ENCODE measurements at regions of chr12 and their contacts with region 1.

Region 1: GRCh38 chr12:39764944-39765560 is 145.4 kb upstream of the ABCD2 start:
- DNase-seq: peak; percentile 18 to 33 (median 27)
- ATAC-seq: peak; percentile 75
- H3K4me3 ChIP-seq: no peak overlapping the region
- H3K27ac ChIP-seq: no peak overlapping the region
- H3K4me1 ChIP-seq: no peaks in the 10 kb centered on the region
- H3K27me3 ChIP-seq: no peaks in the 10 kb centered on the region
- CTCF ChIP-seq: peak; percentile 52 to 82 (median 71); a peak in 5 of 6 replicates
- EP300 ChIP-seq: no peak
- POLR2A ChIP-seq: no peak
- RAD21 ChIP-seq: peak; percentile 73 to 87

Region 2: DNA sequence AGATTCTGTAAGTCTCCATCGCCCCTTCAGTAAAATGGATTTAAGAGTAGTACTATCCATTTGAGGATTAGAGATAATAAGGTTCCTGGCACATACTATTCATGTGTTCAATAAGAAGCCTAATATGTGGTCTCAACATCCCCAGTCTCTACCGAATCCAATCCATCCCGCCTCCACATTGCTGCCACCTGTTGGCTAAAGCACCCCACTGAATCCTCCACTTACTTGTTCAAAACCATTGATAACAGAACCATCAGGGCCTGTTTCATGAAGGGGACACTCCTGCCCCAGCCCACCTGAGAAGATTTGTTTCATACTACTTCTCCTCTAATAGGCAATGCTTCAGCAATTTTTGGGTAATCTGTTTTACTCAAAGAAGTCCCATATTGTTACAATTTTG is 193.3 kb after region 1 on chr12:
- CTCF ChIA-PET with region 1: no interaction called
- POLR2A ChIA-PET with region 1: no interaction called
- in situ Hi-C with region 1: no loop called
- intact Hi-C with region 1: loop called (anchors 2 kb)
- DNase-seq: peak in 1 of 4 experiments; percentile 26
- ATAC-seq: peak; percentile 70
- H3K4me3 ChIP-seq: no peak overlapping the region
- H3K27ac ChIP-seq: no peak overlapping the region
- H3K4me1 ChIP-seq: no peaks in the 10 kb centered on the region
- H3K27me3 ChIP-seq: no peaks in the 10 kb centered on the region
- CTCF ChIP-seq: peak in 2 of 3 experiments; percentile 37 to 50; a peak in 3 of 6 replicates
- EP300 ChIP-seq: no peak
- POLR2A ChIP-seq: no peak
- RAD21 ChIP-seq: peak; percentile 18 to 49; a peak in 2 of 4 replicates

Region 3: DNA sequence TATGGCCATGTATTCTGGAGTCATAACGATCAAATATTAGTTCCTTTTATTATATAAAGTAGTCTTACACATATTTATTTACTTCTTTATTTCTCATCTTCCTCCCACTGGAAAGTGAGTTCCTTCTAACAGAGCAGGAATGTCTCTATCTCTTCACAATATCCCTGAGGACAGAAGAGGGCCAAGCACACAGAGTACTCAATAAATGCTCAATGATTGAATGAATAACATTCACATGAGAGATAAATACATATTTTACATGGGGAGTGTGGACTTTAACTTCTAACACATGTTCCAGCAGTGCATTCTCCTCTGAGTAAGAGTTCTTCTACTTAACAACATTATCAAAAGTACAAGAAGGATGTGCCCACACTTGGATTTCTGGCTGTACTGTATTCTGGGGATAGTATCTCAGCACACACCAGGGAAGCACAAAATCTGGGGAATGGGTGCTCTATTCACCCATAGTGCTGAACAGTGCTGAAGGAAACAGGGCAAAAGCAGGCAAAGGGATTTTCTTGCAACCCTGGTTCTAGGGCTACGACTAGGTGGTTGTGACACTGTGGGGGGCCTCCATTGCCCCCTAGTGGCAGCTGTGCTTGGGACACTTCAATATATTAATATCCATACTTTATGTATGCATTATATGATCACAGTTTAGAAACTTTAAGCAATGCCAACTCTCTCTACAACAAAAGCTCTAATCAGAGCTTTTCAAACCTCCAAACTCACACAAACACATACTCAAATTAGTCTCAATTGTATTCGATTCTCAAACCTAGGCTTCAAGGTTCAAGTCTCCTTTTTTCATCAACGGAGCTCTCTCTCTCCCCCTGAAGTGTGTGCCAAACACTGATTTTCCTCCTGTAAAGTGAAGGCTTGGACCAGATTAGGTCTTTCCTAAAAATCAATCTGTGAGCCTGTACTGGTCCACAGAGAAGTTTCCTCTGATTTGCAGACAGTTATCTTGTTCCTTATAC is 225.4 kb after region 1 on chr12:
- CTCF ChIA-PET with region 1: interaction called, 5 read pairs
- POLR2A ChIA-PET with region 1: no interaction called
- in situ Hi-C with region 1: no loop called
- intact Hi-C with region 1: loop called (anchors 1 kb)
- DNase-seq: peak; percentile 49 to 69 (median 53)
- ATAC-seq: peak; percentile 96
- H3K4me3 ChIP-seq: no peak overlapping the region
- H3K27ac ChIP-seq: no peak overlapping the region
- H3K4me1 ChIP-seq: no peaks in the 10 kb centered on the region
- H3K27me3 ChIP-seq: no peaks in the 10 kb centered on the region
- CTCF ChIP-seq: peak; percentile 77 to 86 (median 84)
- EP300 ChIP-seq: no peak
- POLR2A ChIP-seq: no peak
- RAD21 ChIP-seq: peak; percentile 49 to 72

Measured in K562 (cell line).